K562 (cell line): ENCODE measurements at regions of chr17 and their contacts with region 1.

Region 1: DNA sequence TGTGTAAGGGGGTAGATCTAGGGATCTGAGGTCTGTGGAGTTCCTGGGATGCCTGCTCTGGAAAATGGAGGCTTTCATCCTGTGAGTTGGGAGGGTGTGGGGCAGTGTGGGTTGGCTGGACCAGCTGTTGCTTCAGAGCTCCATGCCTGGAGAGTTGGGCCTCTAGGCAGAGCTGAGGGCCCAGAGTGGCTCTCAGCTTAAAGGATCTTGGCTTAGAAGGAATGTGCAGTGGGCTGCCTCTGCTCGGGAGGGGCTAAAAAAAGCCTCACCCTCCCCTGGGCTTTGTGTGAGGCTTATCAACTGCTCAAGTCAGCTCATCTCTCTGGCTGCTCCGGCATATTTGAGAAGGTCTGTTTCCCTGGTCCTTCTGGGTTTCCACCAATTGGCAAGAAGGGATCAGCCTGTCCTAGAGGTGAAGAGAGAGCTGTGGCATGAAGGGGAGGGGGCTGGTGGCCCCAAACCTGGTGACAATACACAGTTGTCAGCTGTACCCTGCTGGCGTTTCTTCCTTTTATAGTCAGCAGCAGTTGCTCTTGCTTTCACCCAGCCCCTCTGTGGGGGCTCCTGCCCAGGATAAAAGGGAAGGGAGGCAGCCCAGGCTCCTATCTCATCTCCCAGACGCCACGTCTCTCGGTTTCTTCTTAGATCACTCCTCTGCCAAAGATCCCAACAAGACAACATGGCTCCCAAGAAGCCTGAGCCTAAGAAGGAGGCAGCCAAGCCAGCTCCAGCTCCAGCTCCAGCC is at the start of gene MYL4:
- DNase-seq: peak; percentile 67 to 89 (median 74)
- ATAC-seq: peak; percentile 72
- H3K4me3 ChIP-seq: peak within 1 kb of the TSS; percentile 51
- H3K27ac ChIP-seq: peak within 1 kb of the TSS; percentile 89
- H3K4me1 ChIP-seq: peaks cover 28 to 51% of the 10 kb centered on the region in 2 experiments
- H3K27me3 ChIP-seq: no peaks in the 10 kb centered on the region
- CTCF ChIP-seq: no peak
- EP300 ChIP-seq: no peak; the same call in 1 of the 2 replicates
- POLR2A ChIP-seq: peak; percentile 70
- RAD21 ChIP-seq: no peak
- polyA plus RNA-seq, gene MYL4: 287 to 423 TPM

Region 2: GRCh38 chr17:46742565-46743270 is 466.2 kb before region 1 on chr17:
- CTCF ChIA-PET with region 1: no interaction called
- POLR2A ChIA-PET with region 1: no interaction called
- in situ Hi-C with region 1: no loop called
- intact Hi-C with region 1: no loop called
- DNase-seq: peak; percentile 58 to 88 (median 74)
- ATAC-seq: peak; percentile 93
- H3K4me3 ChIP-seq: no peak overlapping the region
- H3K27ac ChIP-seq: peak overlapping the region; percentile 17; the same call in 2 of the 3 replicates
- H3K4me1 ChIP-seq: peaks cover 8 to 12% of the 10 kb centered on the region in 2 experiments; a peak in 3 of 5 replicates
- H3K27me3 ChIP-seq: no peaks in the 10 kb centered on the region
- CTCF ChIP-seq: no peak
- EP300 ChIP-seq: no peak
- POLR2A ChIP-seq: no peak
- RAD21 ChIP-seq: peak in 1 of 2 experiments; percentile 48; a peak in 2 of 4 replicates

Region 3: DNA sequence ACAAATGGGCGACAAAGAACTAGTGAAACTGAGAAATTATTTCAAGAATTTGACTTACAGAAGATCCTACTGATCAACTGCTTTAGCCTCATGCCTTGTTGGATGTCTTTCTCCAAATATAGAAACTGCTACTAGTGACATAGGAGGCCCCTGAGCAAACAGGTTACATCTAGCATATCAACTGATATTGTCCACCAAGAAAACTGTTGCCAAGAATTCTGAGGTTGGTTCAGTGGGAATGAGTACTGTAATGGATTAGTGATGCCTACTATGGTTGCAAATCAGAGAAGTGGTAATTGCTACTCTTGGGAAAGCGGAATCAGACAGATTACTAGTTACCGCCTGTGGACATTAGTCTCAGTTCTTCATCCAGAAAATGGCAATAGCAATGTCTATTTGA is 29.8 kb before region 1 on chr17:
- CTCF ChIA-PET with region 1: no interaction called
- POLR2A ChIA-PET with region 1: interaction called, 4 read pairs
- in situ Hi-C with region 1: no loop called
- intact Hi-C with region 1: loop called (anchors 5 kb)
- DNase-seq: no peak
- ATAC-seq: no peak
- H3K4me3 ChIP-seq: no peak overlapping the region
- H3K27ac ChIP-seq: no peak overlapping the region
- H3K4me1 ChIP-seq: peaks cover 10 to 17% of the 10 kb centered on the region in 2 experiments; a peak in 4 of 5 replicates
- H3K27me3 ChIP-seq: no peaks in the 10 kb centered on the region
- CTCF ChIP-seq: no peak
- EP300 ChIP-seq: no peak
- POLR2A ChIP-seq: no peak
- RAD21 ChIP-seq: no peak

Region 4: DNA sequence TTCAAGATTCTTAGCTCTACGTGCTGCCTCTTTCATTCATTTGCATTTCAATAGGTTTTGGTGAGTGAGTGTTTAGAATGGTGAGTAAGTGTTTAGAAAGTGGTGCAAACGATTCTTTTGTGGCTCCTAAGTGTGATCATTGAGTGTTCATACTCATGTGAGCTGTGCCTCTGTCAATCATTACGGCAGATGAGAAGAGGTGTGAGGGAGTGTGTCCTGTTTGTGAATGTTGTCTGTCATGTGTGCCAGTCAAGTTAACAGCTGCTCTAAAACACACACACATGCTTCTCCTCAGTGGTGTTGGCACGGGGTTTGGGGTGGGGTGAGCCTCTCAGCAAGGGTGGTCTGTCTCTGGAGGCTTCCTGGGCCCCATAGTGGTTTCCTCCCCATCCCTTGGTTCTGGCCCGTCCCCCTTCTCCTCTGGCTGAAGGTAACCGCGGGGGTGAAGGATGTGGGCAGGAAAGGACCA is 11.6 kb after region 1 on chr17:
- CTCF ChIA-PET with region 1: no interaction called
- POLR2A ChIA-PET with region 1: interaction called, 26 read pairs
- in situ Hi-C with region 1: no loop called
- intact Hi-C with region 1: no loop called
- DNase-seq: no peak
- ATAC-seq: no peak
- H3K4me3 ChIP-seq: no peak overlapping the region
- H3K27ac ChIP-seq: no peak overlapping the region; the same call in 2 of the 3 replicates
- H3K4me1 ChIP-seq: peaks cover 31 to 40% of the 10 kb centered on the region in 2 experiments; a peak in 4 of 5 replicates
- H3K27me3 ChIP-seq: no peaks in the 10 kb centered on the region
- CTCF ChIP-seq: no peak
- EP300 ChIP-seq: no peak
- POLR2A ChIP-seq: no peak
- RAD21 ChIP-seq: no peak